Prostate gland (tissue), 2 donors: ENCODE measurements at regions of chr9 and their contacts with region 1.

Region 1: GRCh38 chr9:128275996-128276573 is at the starts of genes GOLGA2 and SWI5:
- DNase-seq: peak; percentile 100
- H3K4me3 ChIP-seq: peak within 1 kb of the TSS; percentile 65 to 91
- H3K27ac ChIP-seq: peak within 1 kb of the TSS; percentile 85 to 91
- H3K4me1 ChIP-seq: peaks cover 18% of the 10 kb centered on the region
- H3K27me3 ChIP-seq: no peaks in the 10 kb centered on the region
- CTCF ChIP-seq: peak in 1 of 4 experiments; percentile 20
- POLR2A ChIP-seq: peak; percentile 95
- total RNA-seq, gene GOLGA2: 92.1 to 147 TPM
- total RNA-seq, gene SWI5: 34.8 to 38.5 TPM

Region 2: DNA sequence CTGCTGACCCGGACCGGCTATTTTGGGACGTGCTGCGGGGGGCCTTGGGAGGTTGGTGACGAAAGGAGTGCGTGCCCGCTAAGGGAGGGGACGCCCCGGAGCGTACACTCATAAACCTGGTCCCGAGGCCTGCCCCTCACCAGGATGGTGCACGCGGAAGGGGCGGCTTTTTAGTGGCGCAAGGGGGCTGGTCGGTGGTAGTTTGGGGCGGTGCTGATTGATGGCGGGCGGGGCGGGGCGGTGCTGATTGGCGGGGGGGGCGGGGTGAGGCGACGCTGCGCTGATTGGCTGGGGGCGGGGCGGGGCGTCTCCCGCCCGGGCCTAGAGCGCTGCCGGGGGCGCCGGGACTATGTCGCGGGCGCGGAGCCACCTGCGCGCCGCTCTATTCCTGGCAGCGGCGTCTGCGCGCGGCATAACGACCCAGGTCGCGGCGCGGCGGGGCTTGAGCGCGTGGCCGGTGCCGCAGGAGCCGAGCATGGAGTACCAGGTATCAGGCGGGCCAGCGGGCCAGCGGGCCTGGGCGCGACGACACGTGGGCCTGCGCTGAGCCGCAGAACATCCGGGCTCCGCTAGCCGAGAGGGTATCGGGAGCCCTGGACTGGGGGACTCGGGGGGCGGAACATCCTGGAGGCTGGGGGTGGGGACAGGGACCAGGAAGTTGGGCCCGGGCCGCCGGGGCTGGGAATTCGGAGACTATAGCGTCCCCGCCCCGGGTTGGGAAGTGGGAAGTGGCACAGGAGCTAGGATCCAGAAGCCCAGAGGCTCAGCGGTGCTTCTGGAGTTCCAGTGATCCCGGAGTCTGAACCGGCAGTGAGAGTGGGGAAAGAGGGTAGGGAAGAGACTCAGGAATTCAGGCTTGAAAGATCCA is 473.3 kb before region 1 on chr9 and contains the start of gene FPGS:
- intact Hi-C with region 1: no loop called
- DNase-seq: peak; percentile 79
- H3K4me3 ChIP-seq: peak within 1 kb of the TSS; percentile 63
- H3K27ac ChIP-seq: peak within 1 kb of the TSS; percentile 92 to 93
- H3K4me1 ChIP-seq: peaks cover 16% of the 10 kb centered on the region
- H3K27me3 ChIP-seq: no peaks in the 10 kb centered on the region
- CTCF ChIP-seq: peak in 1 of 4 experiments; percentile 21
- POLR2A ChIP-seq: peak; percentile 66
- total RNA-seq, gene FPGS: 117 TPM

Region 3: GRCh38 chr9:128191406-128192046 is 84.6 kb before region 1 on chr9 and contains the start of gene CIZ1:
- intact Hi-C with region 1: loop called (anchors 10 kb)
- DNase-seq: peak; percentile 67
- H3K4me3 ChIP-seq: peak within 1 kb of the TSS; percentile 86 to 97
- H3K27ac ChIP-seq: peak within 1 kb of the TSS; percentile 83 to 86
- H3K4me1 ChIP-seq: peaks cover 11% of the 10 kb centered on the region
- H3K27me3 ChIP-seq: no peaks in the 10 kb centered on the region
- CTCF ChIP-seq: peak; percentile 68 to 90 (median 82)
- POLR2A ChIP-seq: peak; percentile 31
- total RNA-seq, gene CIZ1: 55.2 to 94.0 TPM

Region 4: DNA sequence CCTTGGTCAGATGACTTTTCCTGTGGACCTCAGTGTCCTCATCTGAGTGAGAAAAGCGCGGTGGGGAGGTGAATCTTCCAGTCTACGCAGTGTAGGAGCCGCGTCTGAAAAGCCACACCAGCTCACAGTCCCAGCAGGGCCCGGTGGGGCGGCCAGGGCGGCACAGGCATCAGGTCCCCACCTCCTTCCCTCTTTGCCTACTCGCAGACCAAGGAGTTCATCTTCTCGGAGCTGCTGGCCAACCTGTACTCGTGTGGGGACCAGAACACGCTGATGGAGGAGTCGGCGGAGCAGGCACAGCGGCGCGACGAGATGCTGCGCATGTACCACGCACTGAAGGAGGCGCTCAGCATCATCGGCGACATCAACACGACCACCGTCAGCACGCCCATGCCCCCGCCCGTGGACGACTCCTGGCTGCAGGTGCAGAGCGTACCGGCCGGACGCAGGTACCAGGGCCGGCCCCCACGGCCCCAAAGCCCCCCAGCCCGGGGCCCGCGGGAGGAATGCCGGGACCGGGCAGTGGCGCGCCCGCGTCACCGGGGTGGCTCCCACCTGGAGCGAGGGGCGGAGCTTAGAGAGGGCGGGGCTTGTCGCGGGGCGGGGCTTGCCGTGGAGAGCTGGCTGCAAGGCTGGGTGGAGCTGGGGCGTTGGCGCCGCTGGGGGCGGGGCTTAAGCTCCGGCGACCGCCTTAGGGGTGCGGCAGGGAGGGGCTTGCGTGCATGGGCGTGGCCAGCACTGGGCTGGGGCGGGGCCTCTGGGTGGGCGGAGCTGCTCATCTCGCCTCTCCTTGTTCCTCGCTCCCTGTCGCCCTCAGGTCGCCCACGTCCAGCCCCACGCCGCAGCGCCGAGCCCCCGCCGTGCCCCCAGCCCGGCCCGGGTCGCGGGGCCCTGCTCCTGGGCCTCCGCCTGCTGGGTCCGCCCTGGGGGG is 25.9 kb before region 1 on chr9:
- intact Hi-C with region 1: no loop called
- DNase-seq: peak; percentile 95
- H3K4me3 ChIP-seq: peak overlapping the region; percentile 28 to 32
- H3K27ac ChIP-seq: peak overlapping the region; percentile 22 to 23
- H3K4me1 ChIP-seq: no peaks in the 10 kb centered on the region
- H3K27me3 ChIP-seq: no peaks in the 10 kb centered on the region
- CTCF ChIP-seq: no peak
- POLR2A ChIP-seq: no peak

Region 5: GRCh38 chr9:128575469-128575868 is 299.4 kb after region 1 on chr9:
- intact Hi-C with region 1: no loop called
- DNase-seq: peak; percentile 46
- H3K4me3 ChIP-seq: no peak overlapping the region
- H3K27ac ChIP-seq: peak overlapping the region in 1 of 2 donors; percentile 29
- H3K4me1 ChIP-seq: no peaks in the 10 kb centered on the region
- H3K27me3 ChIP-seq: no peaks in the 10 kb centered on the region
- CTCF ChIP-seq: no peak
- POLR2A ChIP-seq: no peak